Right lobe of liver (tissue), 6 donors: ENCODE measurements at regions of chr14 and their contacts with region 1.

Region 1: DNA sequence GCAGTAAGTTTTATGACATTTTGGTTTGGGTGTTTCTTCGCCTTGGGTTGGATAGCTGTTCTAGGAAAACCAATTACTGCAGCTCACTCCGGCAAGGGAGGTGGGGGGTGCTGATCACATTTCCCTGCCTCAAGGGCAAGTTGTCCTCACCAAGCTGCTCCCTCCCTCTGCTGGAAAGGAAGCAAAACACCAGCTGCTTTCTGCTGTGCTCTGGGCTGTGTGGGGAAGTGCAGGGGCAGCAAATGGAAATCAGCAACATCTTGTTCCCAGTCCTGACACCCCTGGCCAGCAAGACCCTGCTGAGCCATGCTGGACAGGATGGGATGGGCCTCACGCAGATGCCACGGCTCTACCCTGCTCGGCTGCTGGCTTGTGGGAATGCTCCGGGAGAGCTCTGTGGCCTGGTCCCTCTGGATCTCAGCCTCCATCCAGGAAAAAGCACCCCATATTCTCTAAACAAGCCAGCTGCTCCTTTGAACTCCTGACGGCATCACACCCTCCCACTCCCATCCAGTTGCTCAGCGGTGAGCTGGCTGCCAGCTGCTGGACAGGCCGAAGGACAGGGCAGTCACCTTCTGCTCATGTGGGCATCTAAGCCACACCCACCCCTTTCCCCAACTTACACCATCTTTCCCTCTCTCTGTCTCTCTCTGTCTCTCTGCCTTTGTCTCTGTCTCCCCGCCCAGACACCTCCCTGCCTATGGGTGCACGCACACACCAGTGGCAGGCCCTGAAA is 52.4 kb upstream of the EIF5 start:
- DNase-seq: peak; percentile 58 to 84 (median 80)
- ATAC-seq: peak; percentile 51 to 66 (median 55)
- H3K4me3 ChIP-seq: no peak overlapping the region
- H3K27ac ChIP-seq: peak overlapping the region; percentile 1 to 62 (median 57)
- H3K4me1 ChIP-seq: peaks cover 0 to 10% (median 3%) of the 10 kb centered on the region in 4 donors
- H3K27me3 ChIP-seq: no peaks in the 10 kb centered on the region
- CTCF ChIP-seq: peak; percentile 29 to 46 (median 42)
- POLR2A ChIP-seq: no peak

Region 2: DNA sequence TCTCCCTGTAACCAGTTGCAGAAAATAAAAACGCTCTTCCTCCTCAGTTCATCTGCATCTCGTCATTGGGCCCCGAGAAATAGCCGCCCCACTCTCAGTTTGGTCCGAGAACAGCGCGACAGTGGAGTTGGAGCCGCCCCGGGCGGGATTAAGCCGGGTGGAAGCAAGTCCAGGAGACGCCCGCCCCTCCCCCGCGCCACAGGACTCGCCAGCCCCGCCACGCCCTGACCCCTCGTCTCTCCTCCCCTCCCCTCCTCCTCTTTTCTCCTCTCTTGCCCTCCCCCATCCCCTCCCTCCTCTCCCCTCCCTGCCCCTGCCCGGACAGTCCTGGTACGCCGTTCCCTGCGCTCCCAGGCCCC is 74.7 kb before region 1 on chr14:
- intact Hi-C with region 1: loop called in 1 of 2 experiments (anchors 10 kb)
- DNase-seq: peak; percentile 94 to 96 (median 96)
- ATAC-seq: peak; percentile 75 to 87 (median 82)
- H3K4me3 ChIP-seq: peak overlapping the region; percentile 49 to 69 (median 56)
- H3K27ac ChIP-seq: peak overlapping the region; percentile 94 to 99 (median 97)
- H3K4me1 ChIP-seq: peaks cover 0 to 16% (median 7%) of the 10 kb centered on the region in 4 donors
- H3K27me3 ChIP-seq: no peaks in the 10 kb centered on the region
- CTCF ChIP-seq: no peak
- POLR2A ChIP-seq: no peak

Region 3: DNA sequence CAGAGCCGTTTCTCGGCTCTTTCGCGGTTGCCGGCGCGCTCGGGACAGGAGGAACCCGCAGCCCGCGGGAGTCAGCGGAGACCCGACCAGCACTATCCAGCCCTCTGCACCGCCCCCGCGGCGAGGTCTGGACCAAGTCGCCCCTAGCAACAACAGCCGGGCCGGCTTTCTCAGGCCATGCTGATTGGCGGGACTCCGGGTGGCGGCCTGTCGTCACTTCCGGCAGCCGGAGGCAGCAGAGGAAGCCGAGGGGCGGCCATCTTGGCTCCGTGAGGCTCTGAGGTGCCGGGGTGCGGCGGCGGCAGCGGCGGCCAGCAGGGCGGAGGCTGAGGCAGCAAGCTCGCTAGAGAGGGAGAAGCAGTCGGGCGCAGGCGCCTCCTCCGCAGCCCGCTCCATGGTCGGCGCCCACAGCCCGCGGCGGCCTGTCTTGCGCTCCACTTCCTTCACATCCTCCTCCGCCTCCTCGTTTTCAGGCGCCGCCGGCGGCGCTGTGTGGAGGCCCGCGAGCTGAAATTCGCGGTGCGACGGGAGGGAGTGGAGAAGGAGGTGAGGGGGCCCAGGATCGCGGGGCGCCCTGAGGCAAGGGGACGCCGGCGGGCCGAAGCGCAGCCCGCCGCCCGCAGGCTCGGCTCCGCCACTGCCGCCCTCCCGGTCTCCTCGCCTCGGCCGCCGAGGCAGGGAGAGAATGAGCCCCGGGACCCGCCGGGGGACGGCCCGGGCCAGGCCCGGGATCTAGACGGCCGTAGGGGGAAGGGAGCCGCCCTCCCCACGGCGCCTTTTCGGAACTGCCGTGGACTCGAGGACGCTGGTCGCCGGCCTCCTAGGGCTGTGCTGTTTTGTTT is 103.7 kb after region 1 on chr14 and contains the start of gene MARK3:
- intact Hi-C with region 1: no loop called
- DNase-seq: peak; percentile 98
- ATAC-seq: peak; percentile 94 to 98 (median 96)
- H3K4me3 ChIP-seq: peak within 1 kb of the TSS; percentile 93 to 98 (median 97)
- H3K27ac ChIP-seq: peak within 1 kb of the TSS; percentile 94 to 99 (median 98)
- H3K4me1 ChIP-seq: peaks cover 0 to 29% (median 2%) of the 10 kb centered on the region in 4 donors
- H3K27me3 ChIP-seq: no peaks in the 10 kb centered on the region
- CTCF ChIP-seq: peak in 3 of 4 donors; percentile 9 to 17 (median 15)
- POLR2A ChIP-seq: peak; percentile 79
- total RNA-seq, gene MARK3: 25.5 to 34.3 (median 27.3) TPM

Region 4: DNA sequence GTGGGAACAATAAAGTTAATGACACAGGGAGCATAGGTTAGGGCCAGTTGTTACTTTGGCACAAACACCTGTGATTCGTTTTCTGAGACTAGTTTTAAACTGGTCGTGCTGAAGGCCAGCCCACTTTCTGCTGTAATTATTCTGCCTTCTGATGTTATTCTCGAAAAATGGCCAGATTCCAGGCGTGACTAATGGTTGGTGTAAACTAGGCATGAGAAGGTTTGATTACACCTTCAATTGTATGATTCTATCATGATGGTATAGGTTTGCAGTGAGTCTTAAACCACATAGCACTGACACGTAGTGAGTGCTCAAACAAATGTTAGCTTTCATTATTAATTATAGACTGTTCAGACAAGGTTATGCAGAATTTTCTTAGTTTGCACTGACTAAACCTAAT is 201.9 kb after region 1 on chr14:
- intact Hi-C with region 1: no loop called
- DNase-seq: no peak
- ATAC-seq: no peak
- H3K4me3 ChIP-seq: no peak overlapping the region
- H3K27ac ChIP-seq: no peak overlapping the region
- H3K4me1 ChIP-seq: peaks cover 0 to 7% (median 0%) of the 10 kb centered on the region in 4 donors
- H3K27me3 ChIP-seq: no peaks in the 10 kb centered on the region
- CTCF ChIP-seq: no peak
- POLR2A ChIP-seq: no peak